ENCODE measurements at regions of chr15 and their contacts with region 1.

Region 1: GRCh38 chr15:25192651-25193050 is 237.9 kb downstream of the SNRPN start:
- DNase-seq: peak; percentile 36 to 86 (median 82)
- ATAC-seq: peak; percentile 37 to 89 (median 52)
- H3K4me3 ChIP-seq: no peak overlapping the region
- H3K27ac ChIP-seq: no peak overlapping the region
- H3K4me1 ChIP-seq: no peaks in the 10 kb centered on the region
- H3K27me3 ChIP-seq: no peaks in the 10 kb centered on the region
- CTCF ChIP-seq: no peak
- POLR2A ChIP-seq: no peak

Region 2: GRCh38 chr15:24916305-24917009 is 276.2 kb before region 1 on chr15:
- intact Hi-C with region 1: loop called in 1 of 2 experiments (anchors 10 kb)
- DNase-seq: no peak
- ATAC-seq: no peak
- H3K4me3 ChIP-seq: no peak overlapping the region
- H3K27ac ChIP-seq: no peak overlapping the region
- H3K4me1 ChIP-seq: no peaks in the 10 kb centered on the region
- H3K27me3 ChIP-seq: no peaks in the 10 kb centered on the region
- CTCF ChIP-seq: no peak
- POLR2A ChIP-seq: no peak

Region 3: GRCh38 chr15:25106209-25106608 is 86.4 kb before region 1 on chr15:
- intact Hi-C with region 1: loop called in 1 of 2 experiments (anchors 10 kb)
- DNase-seq: no peak
- ATAC-seq: no peak
- H3K4me3 ChIP-seq: no peak overlapping the region
- H3K27ac ChIP-seq: no peak overlapping the region
- H3K4me1 ChIP-seq: no peaks in the 10 kb centered on the region
- H3K27me3 ChIP-seq: no peaks in the 10 kb centered on the region
- CTCF ChIP-seq: no peak
- POLR2A ChIP-seq: no peak

Region 4: GRCh38 chr15:25251700-25252390 is 59.2 kb after region 1 on chr15:
- intact Hi-C with region 1: no loop called
- DNase-seq: peak in 2 of 3 donors; percentile 24 to 43
- ATAC-seq: no peak
- H3K4me3 ChIP-seq: no peak overlapping the region
- H3K27ac ChIP-seq: no peak overlapping the region
- H3K4me1 ChIP-seq: no peaks in the 10 kb centered on the region
- H3K27me3 ChIP-seq: no peaks in the 10 kb centered on the region
- CTCF ChIP-seq: no peak
- POLR2A ChIP-seq: no peak

Region 5: GRCh38 chr15:25329696-25330095 is 137.0 kb after region 1 on chr15:
- intact Hi-C with region 1: no loop called
- DNase-seq: no peak
- ATAC-seq: no peak
- H3K4me3 ChIP-seq: no peak overlapping the region
- H3K27ac ChIP-seq: no peak overlapping the region
- H3K4me1 ChIP-seq: no peaks in the 10 kb centered on the region
- H3K27me3 ChIP-seq: no peaks in the 10 kb centered on the region
- CTCF ChIP-seq: no peak
- POLR2A ChIP-seq: no peak